Posterior vena cava (tissue), 2 donors: ENCODE measurements at regions of chr10 and their contacts with region 1.

Region 1: DNA sequence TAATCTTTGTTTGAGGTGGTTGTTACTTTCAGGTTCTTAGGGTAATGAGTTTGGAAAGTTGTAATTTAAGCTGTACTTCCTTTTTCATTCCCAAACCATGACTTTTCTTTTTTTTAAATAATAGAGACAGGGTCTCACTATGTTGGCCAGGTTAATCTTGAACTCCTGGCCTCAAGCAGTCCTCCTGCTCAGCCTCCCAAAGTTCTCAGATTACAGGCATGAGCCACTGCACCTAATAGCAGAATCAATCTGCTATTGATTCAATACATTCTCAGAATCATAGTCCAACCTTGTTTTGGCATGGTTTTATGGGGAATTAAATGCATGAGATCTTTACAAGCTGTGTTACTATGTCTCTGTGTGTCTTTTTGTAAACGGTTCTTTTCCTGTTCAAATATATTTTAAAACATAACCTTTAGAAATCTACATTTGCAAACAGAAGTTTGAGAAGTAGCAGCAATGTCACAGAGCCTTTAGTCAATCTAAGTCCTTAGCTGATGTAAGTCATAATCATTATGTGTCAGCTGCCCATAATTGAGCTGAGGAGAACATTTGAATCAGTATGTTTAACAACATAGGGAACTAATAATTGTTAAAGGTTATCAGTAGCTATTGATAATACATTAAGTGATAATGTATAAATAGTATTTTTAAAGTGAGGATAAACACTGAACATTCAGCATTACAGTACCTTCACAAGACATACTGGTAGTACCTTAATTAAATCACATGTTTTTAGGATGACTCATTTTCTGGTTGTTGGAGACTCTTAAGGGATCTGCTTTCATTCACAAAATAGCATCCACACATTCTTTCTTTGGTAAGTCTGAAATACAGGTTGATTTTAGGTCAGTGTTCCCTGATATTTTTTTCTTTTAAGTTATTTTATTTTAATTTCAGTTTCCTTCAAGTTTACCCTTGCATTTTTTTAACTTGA is 8.8 kb downstream of the INPP5F start:
- DNase-seq: no peak

Region 2: GRCh38 chr10:118585794-118586193 is 1148.9 kb before region 1 on chr10:
- intact Hi-C with region 1: loop called in 1 of 2 experiments (anchors 5 kb)
- DNase-seq: no peak

Region 3: GRCh38 chr10:119807960-119808697 is 73.5 kb after region 1 on chr10:
- intact Hi-C with region 1: no loop called
- DNase-seq: no peak